IMR-90 (cell line): ENCODE measurements at regions of chr12 and their contacts with region 1.

Region 1: DNA sequence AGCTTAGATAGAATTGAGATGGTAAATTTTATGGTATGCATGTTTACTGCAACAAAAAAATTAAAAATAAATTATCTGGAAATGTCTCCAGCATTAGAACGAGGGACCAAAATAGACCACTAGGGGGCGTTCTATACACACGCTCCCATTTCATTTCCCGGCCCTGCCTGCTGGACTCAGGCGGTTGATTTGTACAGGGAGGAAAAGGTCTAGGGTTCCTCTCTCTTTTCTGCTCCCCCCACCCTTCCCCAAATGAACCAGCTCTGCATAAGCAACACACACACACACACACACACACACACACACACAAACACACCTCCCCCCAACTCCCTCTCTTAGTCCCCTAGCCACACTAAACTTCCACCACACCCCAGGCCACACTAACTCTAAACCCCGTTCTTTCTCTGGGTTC is 7.8 kb upstream of the DTX1 start:
- DNase-seq: peak; percentile 51
- ATAC-seq: peak; percentile 91
- H3K4me3 ChIP-seq: no peak overlapping the region
- H3K27ac ChIP-seq: no peak overlapping the region
- H3K4me1 ChIP-seq: no peaks in the 10 kb centered on the region
- H3K27me3 ChIP-seq: no peaks in the 10 kb centered on the region; the same call in 1 of the 2 replicates
- CTCF ChIP-seq: peak; percentile 93
- POLR2A ChIP-seq: no peak
- RAD21 ChIP-seq: peak; percentile 88

Region 2: GRCh38 chr12:113005754-113006153 is 43.0 kb before region 1 on chr12:
- CTCF ChIA-PET with region 1: no interaction called
- POLR2A ChIA-PET with region 1: no interaction called
- dilution Hi-C with region 1: no loop called
- in situ Hi-C with region 1: no loop called
- intact Hi-C with region 1: no loop called
- DNase-seq: no peak
- ATAC-seq: no peak
- H3K4me3 ChIP-seq: no peak overlapping the region
- H3K27ac ChIP-seq: no peak overlapping the region
- H3K4me1 ChIP-seq: no peaks in the 10 kb centered on the region
- H3K27me3 ChIP-seq: no peaks in the 10 kb centered on the region; the same call in 1 of the 2 replicates
- CTCF ChIP-seq: peak; percentile 11; the same call in 1 of the 2 replicates
- POLR2A ChIP-seq: no peak
- RAD21 ChIP-seq: no peak

Region 3: GRCh38 chr12:113098446-113098896 is 49.7 kb after region 1 on chr12:
- CTCF ChIA-PET with region 1: no interaction called
- POLR2A ChIA-PET with region 1: no interaction called
- dilution Hi-C with region 1: no loop called
- in situ Hi-C with region 1: no loop called
- intact Hi-C with region 1: loop called (anchors 1 kb)
- DNase-seq: peak; percentile 63
- ATAC-seq: peak; percentile 82
- H3K4me3 ChIP-seq: no peak overlapping the region
- H3K27ac ChIP-seq: no peak overlapping the region
- H3K4me1 ChIP-seq: no peaks in the 10 kb centered on the region
- H3K27me3 ChIP-seq: peaks cover 3% of the 10 kb centered on the region; the same call in 1 of the 2 replicates
- CTCF ChIP-seq: peak; percentile 56
- POLR2A ChIP-seq: no peak
- RAD21 ChIP-seq: peak; percentile 46; the same call in 1 of the 2 replicates

Region 4: DNA sequence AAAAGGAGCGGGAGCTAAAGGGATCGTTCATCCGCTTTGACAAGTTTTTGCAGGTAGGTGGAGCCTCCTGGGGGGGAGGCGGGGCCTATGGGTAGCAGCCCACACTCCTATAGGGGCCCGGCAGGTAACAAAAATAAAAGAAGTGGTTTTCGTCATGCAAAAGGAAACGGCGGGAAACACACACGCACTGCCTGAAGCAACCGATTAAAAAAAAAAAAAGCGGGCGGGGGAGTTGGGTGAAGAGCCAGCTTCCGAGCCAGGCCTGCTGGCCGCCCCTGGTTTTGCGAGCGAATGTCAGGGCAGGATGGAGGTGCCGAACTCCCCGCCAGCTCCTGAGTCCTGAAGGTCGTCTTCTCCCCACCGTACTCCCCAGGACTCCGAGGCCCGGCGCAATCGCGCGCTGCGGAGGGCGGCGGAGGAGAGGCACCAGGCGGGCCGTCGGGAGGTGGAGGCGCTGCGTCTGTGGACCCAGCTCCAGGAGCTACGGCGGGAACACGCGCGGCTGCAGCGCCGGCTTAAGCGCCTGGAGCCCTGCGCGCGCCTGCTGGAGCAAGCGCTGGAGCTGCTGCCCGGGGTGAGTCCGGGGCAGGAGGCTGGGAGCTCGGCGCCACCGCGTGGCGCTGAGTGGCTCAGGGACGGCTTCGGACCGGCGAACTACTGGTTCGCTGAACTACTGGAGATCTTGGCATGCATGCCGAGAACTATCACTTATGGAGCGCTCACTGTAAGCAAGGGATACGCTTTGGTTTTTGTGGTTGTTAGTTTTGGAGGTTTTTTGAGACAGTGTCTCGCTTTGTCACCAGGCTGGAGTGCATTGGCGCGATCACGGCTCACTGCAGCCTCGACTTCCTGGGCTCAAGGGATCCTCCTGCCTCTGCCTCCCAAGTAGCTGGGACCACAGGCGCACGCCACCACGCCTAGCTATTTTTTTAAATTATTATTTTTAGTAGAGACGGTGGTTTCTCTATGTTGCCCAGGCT is 104.4 kb after region 1 on chr12:
- CTCF ChIA-PET with region 1: interaction called, 8 read pairs
- POLR2A ChIA-PET with region 1: no interaction called
- dilution Hi-C with region 1: no loop called
- in situ Hi-C with region 1: no loop called
- intact Hi-C with region 1: loop called (anchors 1 kb)
- DNase-seq: peak; percentile 65
- ATAC-seq: peak; percentile 82
- H3K4me3 ChIP-seq: no peak overlapping the region
- H3K27ac ChIP-seq: no peak overlapping the region
- H3K4me1 ChIP-seq: peaks cover 2% of the 10 kb centered on the region; the same call in 1 of the 2 replicates
- H3K27me3 ChIP-seq: peaks cover 46% of the 10 kb centered on the region
- CTCF ChIP-seq: peak; percentile 48
- POLR2A ChIP-seq: no peak
- RAD21 ChIP-seq: peak; percentile 47

Region 5: DNA sequence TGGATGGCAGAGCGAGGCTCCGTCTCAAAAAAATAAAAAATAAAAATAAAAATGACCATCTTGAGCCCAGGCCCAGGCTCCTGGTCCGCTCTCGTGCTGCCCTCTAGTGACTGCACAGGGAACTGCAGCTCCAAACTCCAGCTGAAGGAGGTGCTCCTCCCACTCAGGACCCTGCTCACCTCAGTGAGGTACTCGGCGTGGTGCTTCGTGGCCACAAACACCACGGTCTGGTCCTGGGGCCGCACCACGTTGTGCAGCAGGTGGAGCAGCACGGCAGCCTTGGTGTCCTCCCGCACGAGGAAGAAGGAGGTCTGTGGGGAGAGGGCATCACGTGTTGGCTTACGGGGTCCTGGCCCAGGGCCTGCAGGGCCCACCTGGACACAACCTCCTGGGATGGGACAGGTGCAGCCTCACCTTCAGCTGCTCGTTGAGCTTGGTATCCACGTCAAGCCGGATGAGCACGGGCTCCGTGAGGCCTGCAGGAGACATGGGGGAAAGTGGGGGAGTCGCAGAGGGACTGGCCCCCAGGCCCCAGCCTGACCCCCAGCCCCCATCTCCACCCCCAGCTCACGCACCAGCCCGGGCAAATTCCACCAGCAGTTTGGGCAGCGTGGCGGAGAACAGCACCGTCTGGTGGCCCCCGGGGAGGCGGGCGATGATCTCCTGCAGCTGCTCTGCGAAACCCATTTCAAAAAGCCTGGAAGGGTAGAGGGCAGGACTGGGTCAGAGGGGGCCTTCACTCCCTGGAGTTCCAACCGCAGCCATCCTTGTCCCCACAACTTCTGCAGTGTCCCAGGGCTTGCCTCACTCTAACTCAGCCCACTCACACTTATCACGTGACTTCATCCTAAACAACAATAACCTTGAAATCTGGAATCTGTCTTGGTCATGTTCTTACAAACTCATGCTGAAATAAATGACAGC is 126.0 kb after region 1 on chr12:
- CTCF ChIA-PET with region 1: interaction called, 5 read pairs
- POLR2A ChIA-PET with region 1: no interaction called
- dilution Hi-C with region 1: no loop called
- in situ Hi-C with region 1: loop called (anchors 5 kb)
- intact Hi-C with region 1: loop called (anchors 1 kb)
- DNase-seq: peak; percentile 52
- ATAC-seq: peak; percentile 98
- H3K4me3 ChIP-seq: no peak overlapping the region
- H3K27ac ChIP-seq: no peak overlapping the region
- H3K4me1 ChIP-seq: peaks cover 2% of the 10 kb centered on the region; the same call in 1 of the 2 replicates
- H3K27me3 ChIP-seq: no peaks in the 10 kb centered on the region
- CTCF ChIP-seq: peak; percentile 93
- POLR2A ChIP-seq: no peak
- RAD21 ChIP-seq: peak; percentile 87

Region 6: DNA sequence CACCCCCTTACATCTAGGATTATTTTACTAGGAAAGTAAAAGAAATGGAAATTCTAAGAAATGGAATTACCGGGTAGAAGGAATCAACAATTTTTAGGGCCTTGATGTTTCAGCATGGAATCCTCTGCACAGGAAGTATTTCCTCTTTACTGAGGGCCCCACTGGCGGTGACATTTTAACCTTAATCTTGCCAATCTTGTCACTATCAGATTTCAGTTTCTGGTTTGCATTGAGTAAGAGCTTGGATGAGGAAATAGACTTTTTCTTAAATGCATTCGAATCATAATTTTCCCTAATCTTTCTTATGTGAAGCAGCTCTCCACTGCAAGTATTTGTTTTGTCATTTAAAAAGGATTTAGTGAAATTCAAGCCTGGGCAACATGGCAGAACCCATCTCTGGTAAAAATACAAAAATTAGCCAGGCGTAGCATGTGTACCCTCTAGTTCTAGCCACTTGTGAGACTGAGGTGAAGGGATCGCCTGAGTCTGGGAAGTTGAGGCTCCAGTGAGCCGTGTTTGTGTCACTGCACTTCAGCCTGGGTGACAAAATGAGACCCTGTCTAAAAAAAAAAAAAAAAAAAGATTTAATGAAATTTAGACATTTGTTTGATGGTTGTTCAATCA is 213.2 kb after region 1 on chr12:
- CTCF ChIA-PET with region 1: no interaction called
- POLR2A ChIA-PET with region 1: no interaction called
- dilution Hi-C with region 1: no loop called
- in situ Hi-C with region 1: no loop called
- intact Hi-C with region 1: no loop called
- DNase-seq: peak; percentile 22
- ATAC-seq: no peak
- H3K4me3 ChIP-seq: no peak overlapping the region
- H3K27ac ChIP-seq: no peak overlapping the region
- H3K4me1 ChIP-seq: peaks cover 2% of the 10 kb centered on the region; the same call in 1 of the 2 replicates
- H3K27me3 ChIP-seq: no peaks in the 10 kb centered on the region
- CTCF ChIP-seq: no peak
- POLR2A ChIP-seq: no peak
- RAD21 ChIP-seq: no peak

Region 7: GRCh38 chr12:113424915-113425823 is 376.4 kb after region 1 on chr12:
- CTCF ChIA-PET with region 1: no interaction called
- POLR2A ChIA-PET with region 1: no interaction called
- dilution Hi-C with region 1: no loop called
- in situ Hi-C with region 1: no loop called
- intact Hi-C with region 1: loop called (anchors 2 kb)
- DNase-seq: peak; percentile 48
- ATAC-seq: peak; percentile 77
- H3K4me3 ChIP-seq: no peak overlapping the region
- H3K27ac ChIP-seq: no peak overlapping the region
- H3K4me1 ChIP-seq: peaks cover 2% of the 10 kb centered on the region; the same call in 1 of the 2 replicates
- H3K27me3 ChIP-seq: no peaks in the 10 kb centered on the region
- CTCF ChIP-seq: peak; percentile 84
- POLR2A ChIP-seq: no peak
- RAD21 ChIP-seq: peak; percentile 72